Activated T-helper 1 cell treated with anti-CD3 and anti-CD28 coated beads, Interleukin-12 subunit alpha, Interleukin-12 subunit beta, Interleukin-2, Interleukin-4 antibody, amounts not matched to agents 30 ng/mL and 10 ng/mL and 1 ng/mL, durations not matched to agents 14 hours and 24 hours and 36 hours (primary cell): ENCODE measurements at regions of chr1 and their contacts with region 1.

Region 1: DNA sequence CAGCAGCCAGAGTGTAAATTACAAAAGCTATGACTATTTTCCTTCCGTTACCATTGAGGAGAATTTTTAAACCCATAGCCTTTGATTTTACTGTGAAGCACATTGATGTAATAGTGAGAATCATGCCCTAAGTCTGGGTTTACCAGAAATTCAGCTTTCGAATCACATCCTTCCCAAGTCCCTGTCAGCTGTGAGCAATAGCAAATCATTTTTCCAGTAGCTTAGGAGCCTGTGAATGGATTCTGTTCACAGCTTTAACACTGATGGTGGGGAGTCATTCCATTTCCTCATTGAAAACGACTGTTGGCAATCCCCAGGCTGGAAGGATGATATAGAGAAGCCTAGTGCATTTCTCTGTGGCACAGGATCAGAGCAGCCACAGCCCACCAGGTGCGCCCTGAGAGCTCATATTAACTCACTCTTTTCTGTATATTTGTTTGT is 82.2 kb upstream of the C1orf105 start:
- DNase-seq: peak; percentile 6
- H3K4me3 Mint-ChIP-seq: no peak overlapping the region
- H3K27ac Mint-ChIP-seq: peak overlapping the region; percentile 70
- H3K4me1 Mint-ChIP-seq: peaks cover 44% of the 10 kb centered on the region
- H3K27me3 Mint-ChIP-seq: no peaks in the 10 kb centered on the region

Region 2: DNA sequence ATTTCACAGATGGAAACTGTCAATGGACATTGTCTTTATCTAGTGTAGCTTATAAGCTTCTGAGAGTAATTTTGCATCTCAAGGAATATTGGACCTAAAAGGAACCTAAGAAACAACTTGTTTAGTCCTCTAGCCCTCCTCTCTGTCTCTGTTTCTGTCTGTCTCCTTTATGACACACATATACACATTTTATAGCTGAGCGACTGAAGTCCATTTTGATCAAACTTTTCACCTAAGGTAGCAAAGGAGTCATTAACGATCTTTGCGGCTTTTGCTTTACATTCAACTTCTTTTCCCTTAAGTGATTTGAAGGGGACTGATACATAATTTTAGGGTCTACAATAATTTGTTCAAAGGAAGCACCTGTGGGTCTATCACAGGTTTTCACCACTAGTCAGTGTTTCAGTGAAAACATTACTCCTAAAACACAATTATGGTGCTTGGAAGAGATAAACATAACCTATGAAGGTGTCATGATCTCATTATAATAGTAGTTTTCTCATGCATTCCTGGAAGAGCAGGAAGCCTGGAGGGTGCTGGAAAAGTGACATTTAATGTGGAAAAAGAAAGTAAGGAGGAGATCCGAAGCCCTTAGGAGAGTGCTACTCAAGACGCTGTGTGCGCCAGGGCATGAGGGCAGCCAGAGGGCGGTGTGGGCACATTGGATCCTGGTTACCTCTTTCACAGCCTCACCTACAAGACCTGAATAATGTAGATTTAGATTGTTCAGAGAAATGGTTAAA is 248.4 kb before region 1 on chr1:
- intact Hi-C with region 1: loop called (anchors 1 kb)
- DNase-seq: peak; percentile 20
- H3K4me3 Mint-ChIP-seq: no peak overlapping the region
- H3K27ac Mint-ChIP-seq: peak overlapping the region; percentile 36
- H3K4me1 Mint-ChIP-seq: peaks cover 7% of the 10 kb centered on the region
- H3K27me3 Mint-ChIP-seq: no peaks in the 10 kb centered on the region

Region 3: DNA sequence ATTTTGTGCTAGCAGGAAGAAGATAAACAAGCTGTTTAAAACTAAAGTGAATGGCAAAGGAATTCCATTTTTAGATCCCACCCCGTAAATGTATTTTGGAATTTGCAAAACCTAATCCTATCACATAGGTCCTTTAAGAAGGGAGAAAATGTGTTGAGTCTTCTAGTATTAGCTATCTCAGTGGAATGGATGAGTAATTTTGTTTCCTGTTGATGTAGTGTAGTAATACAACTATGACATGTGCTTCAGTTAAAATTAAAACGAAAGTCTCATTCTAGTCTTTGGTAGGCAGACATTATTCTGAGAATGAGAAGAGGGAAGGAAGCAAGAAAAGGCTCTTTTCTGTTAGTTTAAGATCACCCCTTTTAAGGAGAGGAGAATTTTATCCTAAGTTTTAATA is 183.8 kb before region 1 on chr1:
- intact Hi-C with region 1: loop called (anchors 1 kb)
- DNase-seq: no peak
- H3K4me3 Mint-ChIP-seq: peak overlapping the region; percentile 23
- H3K27ac Mint-ChIP-seq: peak overlapping the region; percentile 87
- H3K4me1 Mint-ChIP-seq: peaks cover 7% of the 10 kb centered on the region
- H3K27me3 Mint-ChIP-seq: peaks cover 3% of the 10 kb centered on the region

Region 4: DNA sequence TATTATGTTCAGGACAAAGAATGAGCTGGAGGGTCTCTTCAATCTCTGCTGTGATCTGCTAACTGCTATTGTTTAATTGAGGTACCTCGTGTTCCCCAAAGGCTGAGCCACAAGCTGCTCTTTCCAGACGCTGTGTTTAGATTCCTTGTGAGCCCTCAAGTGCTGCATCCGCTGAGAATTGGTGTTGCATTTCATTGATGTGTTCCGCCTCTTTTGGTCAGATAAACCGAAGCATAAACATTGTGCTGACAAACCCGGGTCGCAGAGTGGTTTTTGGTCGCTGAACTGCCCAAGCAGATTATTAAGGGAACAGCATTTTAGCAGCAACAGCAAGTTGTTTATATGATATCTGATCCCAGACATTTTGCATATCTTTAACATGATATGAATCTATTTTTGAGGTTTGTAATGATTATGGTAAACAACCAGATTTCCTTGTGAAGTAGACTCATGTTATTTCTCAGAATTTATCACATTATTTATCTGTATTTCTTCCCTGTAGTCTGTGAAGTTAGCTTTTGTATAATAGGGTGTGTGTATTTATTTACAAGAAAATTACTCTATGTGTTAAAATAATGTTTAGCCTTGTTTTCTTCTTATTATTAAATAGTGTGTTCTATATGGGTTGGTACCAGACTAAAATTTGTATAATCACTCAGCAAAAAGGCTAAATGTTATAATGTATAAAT is 135.0 kb before region 1 on chr1:
- intact Hi-C with region 1: no loop called
- DNase-seq: no peak
- H3K4me3 Mint-ChIP-seq: no peak overlapping the region
- H3K27ac Mint-ChIP-seq: no peak overlapping the region
- H3K4me1 Mint-ChIP-seq: no peaks in the 10 kb centered on the region
- H3K27me3 Mint-ChIP-seq: no peaks in the 10 kb centered on the region

Region 5: DNA sequence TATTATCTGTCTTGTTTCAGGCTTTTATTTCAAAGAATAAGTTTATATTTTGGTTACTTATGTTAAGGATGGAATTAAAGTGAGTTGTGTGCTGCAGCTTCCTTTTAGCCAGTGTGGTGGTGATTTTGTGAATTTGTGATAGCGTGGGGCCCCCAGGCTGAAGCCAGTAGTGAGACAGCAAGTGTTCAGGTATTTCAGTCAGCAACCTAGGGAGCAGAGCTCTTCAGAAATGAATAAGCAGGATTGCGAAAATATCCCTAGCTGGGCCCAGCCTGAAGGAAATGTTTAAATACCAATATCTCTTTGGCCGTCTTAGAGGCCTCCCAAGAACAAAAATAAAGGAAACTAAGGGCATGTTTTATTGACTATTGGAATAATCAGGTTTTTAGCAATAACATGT is 68.7 kb before region 1 on chr1:
- intact Hi-C with region 1: loop called (anchors 1 kb)
- DNase-seq: no peak
- H3K4me3 Mint-ChIP-seq: peak overlapping the region; percentile 43
- H3K27ac Mint-ChIP-seq: peak overlapping the region; percentile 82
- H3K4me1 Mint-ChIP-seq: peaks cover 64% of the 10 kb centered on the region
- H3K27me3 Mint-ChIP-seq: no peaks in the 10 kb centered on the region

Region 6: GRCh38 chr1:172380441-172381244 is 42.3 kb after region 1 on chr1:
- intact Hi-C with region 1: loop called (anchors 1 kb)
- DNase-seq: no peak
- H3K4me3 Mint-ChIP-seq: peak overlapping the region; percentile 69
- H3K27ac Mint-ChIP-seq: peak overlapping the region; percentile 59
- H3K4me1 Mint-ChIP-seq: peaks cover 39% of the 10 kb centered on the region
- H3K27me3 Mint-ChIP-seq: peaks cover 4% of the 10 kb centered on the region

Region 7: DNA sequence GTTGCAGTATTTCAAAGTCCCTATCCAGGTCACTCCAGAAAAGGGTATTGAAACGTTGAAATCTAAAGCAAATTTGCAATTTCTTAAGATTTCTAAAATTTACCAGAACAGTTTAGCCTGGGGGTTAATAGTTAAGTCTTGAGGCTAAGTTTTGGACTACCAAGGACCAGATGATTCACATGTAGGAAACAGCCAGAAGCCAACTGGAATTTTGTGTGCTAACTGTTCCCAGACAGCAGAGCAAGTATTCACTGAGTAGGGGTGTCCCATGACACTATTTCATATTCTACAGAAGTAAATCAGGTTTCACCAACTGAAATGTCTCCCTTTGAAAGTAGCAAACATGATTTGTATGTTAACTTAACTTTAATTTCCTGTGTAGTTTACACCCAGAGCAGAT is 70.6 kb after region 1 on chr1:
- intact Hi-C with region 1: no loop called
- DNase-seq: no peak
- H3K4me3 Mint-ChIP-seq: no peak overlapping the region
- H3K27ac Mint-ChIP-seq: no peak overlapping the region
- H3K4me1 Mint-ChIP-seq: no peaks in the 10 kb centered on the region
- H3K27me3 Mint-ChIP-seq: peaks cover 4% of the 10 kb centered on the region

Region 8: GRCh38 chr1:172449585-172450534 is 111.5 kb after region 1 on chr1:
- intact Hi-C with region 1: loop called (anchors 1 kb)
- DNase-seq: peak; percentile 30
- H3K4me3 Mint-ChIP-seq: peak overlapping the region; percentile 43
- H3K27ac Mint-ChIP-seq: no peak overlapping the region
- H3K4me1 Mint-ChIP-seq: peaks cover 40% of the 10 kb centered on the region
- H3K27me3 Mint-ChIP-seq: peaks cover 2% of the 10 kb centered on the region